Endothelial cell of umbilical vein (primary cell): ENCODE measurements at regions of chr17 and their contacts with region 1.

Region 1: GRCh38 chr17:38421171-38421841 is 7.0 kb upstream of the ARHGAP23 start:
- DNase-seq: peak; percentile 29
- H3K4me3 ChIP-seq: no peak overlapping the region
- H3K27ac ChIP-seq: no peak overlapping the region
- H3K4me1 ChIP-seq: peaks cover 26% of the 10 kb centered on the region
- H3K27me3 ChIP-seq: peaks cover 20 to 22% of the 10 kb centered on the region in 2 experiments
- CTCF ChIP-seq: no peak
- POLR2A ChIP-seq: no peak

Region 2: DNA sequence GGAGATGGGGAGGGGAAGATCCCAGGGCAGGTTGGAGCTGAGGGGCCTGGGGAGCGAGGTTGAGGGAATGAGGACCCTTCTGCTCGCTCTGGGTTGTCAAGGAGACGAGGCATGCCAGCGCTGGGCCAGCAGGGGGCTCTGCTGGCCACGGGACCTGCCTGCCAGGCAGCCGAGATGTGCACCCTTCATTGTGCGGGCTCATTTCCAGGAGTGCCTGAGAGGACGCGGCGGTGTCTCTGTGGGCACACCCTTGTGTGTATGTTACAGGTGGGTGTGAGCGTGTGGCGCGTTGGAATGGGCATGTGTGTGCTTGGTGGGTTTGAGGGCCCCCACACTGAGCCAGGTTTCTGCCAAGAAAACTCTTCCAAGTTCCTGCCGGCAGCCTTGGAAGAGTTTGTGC is 22.8 kb after region 1 on chr17:
- CTCF ChIA-PET with region 1: interaction called, 35 read pairs
- POLR2A ChIA-PET with region 1: no interaction called
- dilution Hi-C with region 1: no loop called
- intact Hi-C with region 1: loop called (anchors 1 kb)
- DNase-seq: peak; percentile 68
- H3K4me3 ChIP-seq: no peak overlapping the region
- H3K27ac ChIP-seq: no peak overlapping the region
- H3K4me1 ChIP-seq: peaks cover 28% of the 10 kb centered on the region
- H3K27me3 ChIP-seq: no peaks in the 10 kb centered on the region
- CTCF ChIP-seq: peak; percentile 97 to 99
- POLR2A ChIP-seq: no peak

Region 3: DNA sequence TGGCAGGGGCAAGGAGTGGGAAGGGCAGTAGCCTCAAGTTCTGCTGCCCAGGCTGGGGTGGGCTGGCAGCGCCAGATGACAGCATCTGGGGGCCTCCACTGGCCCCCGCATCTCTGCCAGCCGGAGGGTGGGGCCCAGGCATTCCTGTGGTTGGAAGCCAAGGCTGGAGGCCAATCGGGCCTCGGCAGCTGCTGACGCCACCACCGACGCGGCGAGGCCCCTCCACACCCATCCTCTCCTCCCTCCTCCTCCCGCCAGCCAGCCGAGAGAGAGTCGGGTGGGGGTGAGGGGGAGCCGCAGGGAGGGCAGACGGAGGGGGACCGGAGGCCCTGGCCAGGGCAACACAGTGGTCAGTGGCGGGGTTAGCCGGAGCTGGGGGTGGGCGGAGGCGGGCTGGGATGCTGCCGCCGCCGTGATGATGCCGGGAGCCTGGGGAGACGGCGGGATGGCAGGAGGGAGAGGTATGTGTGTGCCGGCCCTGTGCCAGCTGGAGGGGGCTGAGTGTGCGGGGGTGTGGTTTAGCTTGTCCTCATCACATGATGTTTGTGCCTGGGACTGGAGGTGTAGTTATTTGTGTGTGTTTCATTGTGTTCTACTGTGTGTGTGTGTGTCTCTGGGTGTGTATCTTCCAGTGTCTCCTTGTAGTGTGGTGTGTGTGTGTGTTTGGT is 43.6 kb after region 1 on chr17:
- CTCF ChIA-PET with region 1: interaction called, 12 read pairs
- POLR2A ChIA-PET with region 1: interaction called, 3 read pairs
- dilution Hi-C with region 1: no loop called
- intact Hi-C with region 1: no loop called
- DNase-seq: peak; percentile 81
- H3K4me3 ChIP-seq: peak overlapping the region in 1 of 3 experiments; percentile 23
- H3K27ac ChIP-seq: peak overlapping the region; percentile 65
- H3K4me1 ChIP-seq: peaks cover 22% of the 10 kb centered on the region
- H3K27me3 ChIP-seq: no peaks in the 10 kb centered on the region
- CTCF ChIP-seq: no peak
- POLR2A ChIP-seq: peak; percentile 64

Region 4: DNA sequence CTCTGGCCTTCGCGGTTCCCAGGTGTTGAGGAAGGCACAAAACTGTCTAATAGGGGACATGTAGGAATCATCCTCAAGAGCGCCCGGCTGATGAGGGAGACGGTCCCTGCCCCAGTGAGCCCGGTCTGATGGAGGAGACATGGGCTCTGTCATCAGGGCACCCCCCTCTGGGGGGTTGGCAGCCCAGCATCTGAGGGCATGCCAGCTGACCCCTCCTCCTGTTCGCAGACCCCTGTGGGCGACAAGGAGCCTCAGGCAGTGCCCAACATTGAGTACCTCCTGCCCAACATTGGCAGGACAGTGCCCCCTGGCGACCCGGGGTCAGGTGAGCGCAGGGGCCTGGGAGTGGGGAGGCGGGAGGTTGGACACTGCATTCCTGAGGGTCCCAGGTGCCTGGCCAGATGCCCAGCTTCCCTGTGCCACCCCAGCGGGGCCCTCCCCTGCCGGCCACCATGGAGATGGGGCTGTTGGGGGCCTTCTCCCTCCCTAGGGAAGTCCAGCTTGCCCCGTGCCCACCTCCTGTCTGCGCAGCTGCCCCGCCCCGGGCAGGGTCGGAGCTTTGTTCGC is 77.0 kb after region 1 on chr17:
- CTCF ChIA-PET with region 1: interaction called, 7 read pairs
- POLR2A ChIA-PET with region 1: no interaction called
- dilution Hi-C with region 1: no loop called
- intact Hi-C with region 1: loop called (anchors 2 kb)
- DNase-seq: no peak
- H3K4me3 ChIP-seq: no peak overlapping the region
- H3K27ac ChIP-seq: no peak overlapping the region
- H3K4me1 ChIP-seq: no peaks in the 10 kb centered on the region
- H3K27me3 ChIP-seq: no peaks in the 10 kb centered on the region
- CTCF ChIP-seq: no peak
- POLR2A ChIP-seq: no peak

Region 5: DNA sequence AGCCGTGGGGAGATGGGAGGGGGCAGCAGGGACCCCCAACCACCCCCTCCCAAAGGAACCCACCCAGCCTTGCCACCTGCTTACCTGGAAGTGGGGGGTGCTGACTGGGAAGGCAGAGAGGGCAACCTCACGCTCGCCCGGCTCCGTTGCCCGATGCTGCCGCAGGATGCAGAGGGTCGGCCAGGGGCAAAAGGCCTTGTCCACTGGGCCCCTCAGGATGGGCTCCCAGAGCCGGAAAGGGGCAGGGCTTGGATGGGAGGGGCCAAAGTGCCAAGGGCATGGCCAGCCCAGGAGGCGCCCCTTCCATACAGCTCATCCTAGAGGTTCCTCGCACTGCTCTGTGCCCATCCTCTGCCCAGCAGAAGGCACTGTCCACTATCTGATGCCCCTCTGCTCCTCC is 125.1 kb after region 1 on chr17:
- CTCF ChIA-PET with region 1: no interaction called
- POLR2A ChIA-PET with region 1: no interaction called
- dilution Hi-C with region 1: no loop called
- intact Hi-C with region 1: no loop called
- DNase-seq: no peak
- H3K4me3 ChIP-seq: no peak overlapping the region
- H3K27ac ChIP-seq: no peak overlapping the region
- H3K4me1 ChIP-seq: no peaks in the 10 kb centered on the region
- H3K27me3 ChIP-seq: no peaks in the 10 kb centered on the region
- CTCF ChIP-seq: no peak
- POLR2A ChIP-seq: no peak

Region 6: GRCh38 chr17:38584350-38584925 is 163.1 kb after region 1 on chr17:
- CTCF ChIA-PET with region 1: interaction called, 7 read pairs
- POLR2A ChIA-PET with region 1: no interaction called
- dilution Hi-C with region 1: no loop called
- intact Hi-C with region 1: loop called (anchors 1 kb)
- DNase-seq: peak; percentile 28
- H3K4me3 ChIP-seq: no peak overlapping the region
- H3K27ac ChIP-seq: no peak overlapping the region
- H3K4me1 ChIP-seq: no peaks in the 10 kb centered on the region
- H3K27me3 ChIP-seq: peaks cover 24 to 26% of the 10 kb centered on the region in 2 experiments
- CTCF ChIP-seq: peak; percentile 93 to 98
- POLR2A ChIP-seq: no peak

Region 7: GRCh38 chr17:38693700-38694329 is 272.5 kb after region 1 on chr17:
- CTCF ChIA-PET with region 1: no interaction called
- POLR2A ChIA-PET with region 1: no interaction called
- dilution Hi-C with region 1: no loop called
- intact Hi-C with region 1: no loop called
- DNase-seq: no peak
- H3K4me3 ChIP-seq: no peak overlapping the region
- H3K27ac ChIP-seq: no peak overlapping the region
- H3K4me1 ChIP-seq: no peaks in the 10 kb centered on the region
- H3K27me3 ChIP-seq: peaks cover 0 to 2% of the 10 kb centered on the region in 2 experiments
- CTCF ChIP-seq: no peak
- POLR2A ChIP-seq: no peak